ENCODE measurements at regions of chr11 and their contacts with region 1.

Region 1: GRCh38 chr11:1882519-1883238 is 9.0 kb downstream of the PRR33 start:
- DNase-seq: peak; percentile 83
- ATAC-seq: peak; percentile 85
- H3K4me3 Mint-ChIP-seq: no peak overlapping the region
- H3K27ac Mint-ChIP-seq: no peak overlapping the region
- H3K4me1 Mint-ChIP-seq: peaks cover 16% of the 10 kb centered on the region
- H3K27me3 Mint-ChIP-seq: no peaks in the 10 kb centered on the region

Region 2: GRCh38 chr11:1271002-1271401 is 611.7 kb before region 1 on chr11:
- CTCF ChIA-PET with region 1: no interaction called
- POLR2A ChIA-PET with region 1: no interaction called
- DNase-seq: no peak
- ATAC-seq: no peak
- H3K4me3 Mint-ChIP-seq: no peak overlapping the region
- H3K27ac Mint-ChIP-seq: no peak overlapping the region
- H3K4me1 Mint-ChIP-seq: peaks cover 3% of the 10 kb centered on the region
- H3K27me3 Mint-ChIP-seq: no peaks in the 10 kb centered on the region

Region 3: GRCh38 chr11:1852877-1853276 is 29.8 kb before region 1 on chr11 and contains the start of gene LSP1:
- CTCF ChIA-PET with region 1: interaction called, 23 read pairs
- POLR2A ChIA-PET with region 1: interaction called, 16 read pairs
- DNase-seq: peak; percentile 93
- ATAC-seq: peak; percentile 63
- H3K4me3 Mint-ChIP-seq: peak within 1 kb of the TSS; percentile 99
- H3K27ac Mint-ChIP-seq: peak within 1 kb of the TSS; percentile 98
- H3K4me1 Mint-ChIP-seq: peaks cover 63% of the 10 kb centered on the region
- H3K27me3 Mint-ChIP-seq: peaks cover 3% of the 10 kb centered on the region
- total RNA-seq, gene LSP1: 463 to 477 TPM

Region 4: GRCh38 chr11:1917671-1918516 is 35.2 kb after region 1 on chr11:
- CTCF ChIA-PET with region 1: interaction called, 17 read pairs
- POLR2A ChIA-PET with region 1: interaction called, 3 read pairs
- DNase-seq: no peak
- ATAC-seq: no peak
- H3K4me3 Mint-ChIP-seq: no peak overlapping the region
- H3K27ac Mint-ChIP-seq: no peak overlapping the region
- H3K4me1 Mint-ChIP-seq: peaks cover 18% of the 10 kb centered on the region
- H3K27me3 Mint-ChIP-seq: peaks cover 8% of the 10 kb centered on the region

Region 5: DNA sequence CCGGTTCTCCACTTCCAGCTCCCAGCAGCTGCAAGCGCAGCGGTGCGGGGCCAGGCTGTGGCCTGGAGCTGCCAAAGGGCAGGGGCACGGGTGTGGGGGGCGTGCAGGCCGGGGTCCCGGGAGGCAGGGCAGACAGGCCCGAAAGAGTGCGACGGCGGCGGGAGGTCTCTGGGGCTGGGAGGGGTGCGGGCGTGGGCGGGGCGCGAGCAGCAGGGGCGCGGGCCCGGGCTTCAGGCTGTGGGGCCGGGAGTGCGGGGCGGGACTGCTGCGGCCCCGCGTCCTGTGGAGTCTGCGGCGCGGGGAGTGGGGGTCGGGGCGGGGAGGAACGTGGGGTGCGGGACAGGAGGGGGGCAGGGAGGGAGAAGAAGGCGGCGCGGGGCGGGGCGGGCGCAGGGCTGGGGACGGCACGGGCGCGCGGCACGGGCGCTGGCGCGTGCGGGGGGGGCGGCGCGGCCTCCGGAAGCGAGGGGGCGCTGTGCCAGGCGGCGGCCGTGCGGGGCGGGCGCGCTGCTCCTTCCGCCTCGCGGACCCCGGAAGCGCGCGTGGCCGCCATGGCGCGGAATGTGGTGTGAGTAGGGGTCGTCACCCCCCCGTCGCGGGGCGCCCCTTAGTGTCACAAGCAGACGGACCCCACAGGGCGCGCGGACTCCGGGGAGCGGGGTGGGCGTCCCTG is 64.3 kb after region 1 on chr11 and contains the start of gene MRPL23:
- CTCF ChIA-PET with region 1: interaction called, 19 read pairs
- POLR2A ChIA-PET with region 1: interaction called, 3 read pairs
- DNase-seq: peak; percentile 33
- ATAC-seq: peak; percentile 87
- H3K4me3 Mint-ChIP-seq: no peak within 1 kb of the TSS
- H3K27ac Mint-ChIP-seq: no peak within 1 kb of the TSS
- H3K4me1 Mint-ChIP-seq: no peaks in the 10 kb centered on the region
- H3K27me3 Mint-ChIP-seq: no peaks in the 10 kb centered on the region
- total RNA-seq, gene MRPL23: 109 to 110 TPM

Region 6: DNA sequence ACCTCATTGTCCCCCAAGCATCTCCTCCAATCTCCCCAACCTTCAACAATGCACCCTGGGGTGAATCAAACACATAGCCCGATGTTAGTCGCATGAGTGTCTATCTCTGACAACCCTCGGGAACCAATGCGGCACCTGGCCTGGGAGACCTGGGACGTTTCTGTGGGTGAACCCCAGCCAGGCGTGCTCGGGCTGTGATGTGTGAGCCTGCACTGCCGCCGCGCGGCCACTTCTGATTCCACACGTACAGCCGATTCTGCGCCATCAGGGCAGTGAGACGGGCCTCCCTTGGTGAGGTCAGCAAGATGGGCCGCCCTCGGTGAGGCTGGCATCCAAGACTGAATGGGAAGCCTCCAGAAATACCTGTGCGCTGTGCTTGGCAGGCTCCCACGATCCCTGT is 120.1 kb after region 1 on chr11:
- CTCF ChIA-PET with region 1: interaction called, 17 read pairs
- POLR2A ChIA-PET with region 1: interaction called, 3 read pairs
- DNase-seq: no peak
- ATAC-seq: peak; percentile 57
- H3K4me3 Mint-ChIP-seq: no peak overlapping the region
- H3K27ac Mint-ChIP-seq: no peak overlapping the region
- H3K4me1 Mint-ChIP-seq: no peaks in the 10 kb centered on the region
- H3K27me3 Mint-ChIP-seq: no peaks in the 10 kb centered on the region